ENCODE measurements at regions of chr7 and their contacts with region 1.

Region 1: GRCh38 chr7:155815332-155816191 is 3.3 kb upstream of the SHH start:
- DNase-seq: no peak
- H3K4me3 ChIP-seq: no peak overlapping the region
- H3K27ac ChIP-seq: no peak overlapping the region
- H3K4me1 ChIP-seq: peaks cover 0 to 10% (median 7%) of the 10 kb centered on the region in 4 donors
- H3K27me3 ChIP-seq: peaks cover 14 to 97% (median 48%) of the 10 kb centered on the region in 3 donors
- CTCF ChIP-seq: peak in 2 of 4 experiments; percentile 24
- EP300 ChIP-seq: no peak
- POLR2A ChIP-seq: no peak

Region 2: GRCh38 chr7:156064971-156065386 is 249.4 kb after region 1 on chr7:
- intact Hi-C with region 1: no loop called
- DNase-seq: peak; percentile 1
- H3K4me3 ChIP-seq: no peak overlapping the region
- H3K27ac ChIP-seq: no peak overlapping the region
- H3K4me1 ChIP-seq: peaks cover 0 to 11% (median 6%) of the 10 kb centered on the region in 4 donors
- H3K27me3 ChIP-seq: no peaks in the 10 kb centered on the region
- CTCF ChIP-seq: no peak
- EP300 ChIP-seq: no peak
- POLR2A ChIP-seq: no peak

Region 3: DNA sequence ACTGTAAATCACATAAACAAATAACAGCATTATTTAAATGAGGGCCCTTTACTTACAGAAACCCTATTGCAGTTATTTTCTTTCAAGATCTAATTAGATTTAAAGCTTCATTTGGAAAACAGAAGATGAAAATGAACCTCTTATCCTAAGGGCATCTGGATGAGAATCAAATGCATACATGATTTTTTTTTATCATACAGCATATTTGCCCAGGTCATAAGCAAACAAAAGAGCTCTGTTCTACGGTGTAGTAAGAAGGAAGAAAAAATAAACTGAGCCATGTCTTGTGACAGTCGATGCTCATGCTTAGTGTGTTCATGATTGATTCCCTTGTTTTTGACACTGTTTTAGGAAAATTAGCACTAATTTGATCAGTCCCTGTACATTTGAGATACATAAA is 622.4 kb after region 1 on chr7:
- intact Hi-C with region 1: loop called (anchors 5 kb)
- DNase-seq: no peak
- H3K4me3 ChIP-seq: no peak overlapping the region
- H3K27ac ChIP-seq: no peak overlapping the region
- H3K4me1 ChIP-seq: no peaks in the 10 kb centered on the region
- H3K27me3 ChIP-seq: peaks cover 0 to 10% (median 0%) of the 10 kb centered on the region in 3 donors
- CTCF ChIP-seq: no peak
- EP300 ChIP-seq: no peak
- POLR2A ChIP-seq: no peak